Heart right ventricle (tissue), 16 donors: ENCODE measurements at regions of chr6 and their contacts with region 1.

Region 1: GRCh38 chr6:67433124-67433523 is 1202.0 kb upstream of the ADGRB3 start:
- DNase-seq: no peak
- ATAC-seq: no peak
- H3K4me3 ChIP-seq: no peak overlapping the region
- H3K27ac ChIP-seq: no peak overlapping the region
- H3K4me1 ChIP-seq: no peaks in the 10 kb centered on the region
- H3K27me3 ChIP-seq: no peaks in the 10 kb centered on the region
- CTCF ChIP-seq: no peak

Region 2: DNA sequence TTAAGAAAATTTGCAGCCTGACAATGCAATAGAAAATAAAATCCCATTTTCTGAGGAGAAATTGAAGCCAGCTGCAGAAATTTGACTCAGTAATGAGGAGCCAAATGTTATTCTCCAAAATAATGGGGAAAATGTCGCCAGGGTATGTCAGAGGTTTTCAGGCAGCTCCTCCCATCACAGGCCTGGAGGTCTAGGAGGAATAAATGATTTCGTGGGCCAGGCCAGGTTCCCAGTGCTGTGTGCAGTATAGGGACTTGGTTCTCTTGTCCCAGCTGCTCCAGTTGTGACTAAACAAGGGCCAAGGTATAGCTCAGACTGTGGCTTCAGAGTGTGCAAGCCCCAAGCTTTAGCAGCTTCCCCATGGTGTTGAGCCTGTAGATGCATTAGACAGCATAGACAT is 38.9 kb before region 1 on chr6:
- intact Hi-C with region 1: no loop called
- DNase-seq: no peak
- ATAC-seq: no peak
- H3K4me3 ChIP-seq: no peak overlapping the region
- H3K27ac ChIP-seq: no peak overlapping the region
- H3K4me1 ChIP-seq: no peaks in the 10 kb centered on the region
- H3K27me3 ChIP-seq: no peaks in the 10 kb centered on the region
- CTCF ChIP-seq: no peak

Region 3: GRCh38 chr6:68689910-68690309 is 1256.8 kb after region 1 on chr6:
- intact Hi-C with region 1: loop called in 1 of 10 experiments (anchors 5 kb)
- DNase-seq: no peak
- ATAC-seq: no peak
- H3K4me3 ChIP-seq: no peak overlapping the region
- H3K27ac ChIP-seq: no peak overlapping the region
- H3K4me1 ChIP-seq: no peaks in the 10 kb centered on the region
- H3K27me3 ChIP-seq: no peaks in the 10 kb centered on the region
- CTCF ChIP-seq: no peak